ENCODE measurements at regions of chr5 and their contacts with region 1.

Region 1: DNA sequence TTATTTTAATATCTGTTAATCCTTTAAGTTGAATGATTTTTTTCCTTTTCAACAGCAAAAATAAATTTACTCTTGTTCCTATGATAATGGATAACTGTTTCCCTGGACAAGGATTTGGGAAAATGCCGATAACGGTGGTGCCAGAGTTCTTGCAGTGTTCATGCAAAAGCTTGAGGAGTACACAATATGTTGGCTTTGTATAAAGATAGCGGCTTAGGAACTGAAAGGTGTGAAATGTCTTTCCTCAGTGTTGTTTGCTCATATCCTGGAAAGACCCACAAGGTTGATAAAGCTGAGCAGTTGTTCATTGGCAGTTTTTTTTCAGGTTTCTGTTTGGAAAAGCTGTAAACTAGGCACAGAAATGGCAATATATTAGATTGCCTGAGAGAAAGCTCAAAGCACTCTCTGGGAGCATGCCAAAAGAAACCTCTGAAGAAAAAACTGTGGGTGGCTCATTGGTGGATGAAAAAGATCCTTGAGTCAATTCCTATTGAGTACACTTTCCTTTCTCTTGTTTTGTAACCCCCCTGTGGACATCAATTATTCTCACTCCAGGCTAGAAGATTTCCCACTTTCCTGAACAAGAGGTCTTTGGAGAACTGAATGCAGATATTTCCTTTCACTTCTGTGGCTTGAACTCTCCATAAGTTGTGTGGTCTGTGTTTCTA is 117.2 kb upstream of the RGMB start:
- DNase-seq: no peak
- ATAC-seq: no peak

Region 2: GRCh38 chr5:98524773-98525172 is 131.5 kb before region 1 on chr5:
- intact Hi-C with region 1: loop called (anchors 10 kb)
- DNase-seq: no peak
- ATAC-seq: no peak